ENCODE measurements at regions of chr4 and their contacts with region 1.

Region 1: GRCh38 chr4:38804654-38805295 is at the start of gene TLR1:
- DNase-seq: peak in 1 of 2 donors; percentile 77
- ATAC-seq: peak; percentile 82 to 85 (median 83)
- H3K4me3 ChIP-seq: peak within 1 kb of the TSS; percentile 58
- H3K4me3 Mint-ChIP-seq: peak within 1 kb of the TSS; percentile 99
- H3K27ac ChIP-seq: peak within 1 kb of the TSS; percentile 63
- H3K27ac Mint-ChIP-seq: peak within 1 kb of the TSS; percentile 94
- H3K4me1 ChIP-seq: peaks cover 32% of the 10 kb centered on the region
- H3K4me1 Mint-ChIP-seq: peaks cover 41 to 51% of the 10 kb centered on the region in 2 donors
- H3K27me3 ChIP-seq: no peaks in the 10 kb centered on the region
- H3K27me3 Mint-ChIP-seq: no peaks in the 10 kb centered on the region
- CTCF ChIP-seq: peak; percentile 78
- total RNA-seq, gene TLR1: 25.6 to 51.5 (median 30.0) TPM

Region 2: GRCh38 chr4:38681281-38681991 is 123.3 kb before region 1 on chr4:
- intact Hi-C with region 1: loop called (anchors 10 kb)
- DNase-seq: no peak
- ATAC-seq: no peak
- H3K4me3 ChIP-seq: no peak overlapping the region
- H3K4me3 Mint-ChIP-seq: peak overlapping the region; percentile 59
- H3K27ac ChIP-seq: no peak overlapping the region
- H3K27ac Mint-ChIP-seq: peak overlapping the region; percentile 87
- H3K4me1 ChIP-seq: peaks cover 42% of the 10 kb centered on the region
- H3K4me1 Mint-ChIP-seq: peaks cover 76 to 82% of the 10 kb centered on the region in 2 donors
- H3K27me3 ChIP-seq: no peaks in the 10 kb centered on the region
- H3K27me3 Mint-ChIP-seq: no peaks in the 10 kb centered on the region
- CTCF ChIP-seq: no peak

Region 3: GRCh38 chr4:38856524-38857337 is 52.0 kb after region 1 on chr4 and contains the start of gene TLR6:
- intact Hi-C with region 1: loop called (anchors 5 kb)
- DNase-seq: peak in 1 of 2 donors; percentile 89
- ATAC-seq: peak; percentile 77 to 81 (median 79)
- H3K4me3 ChIP-seq: peak within 1 kb of the TSS; percentile 48
- H3K4me3 Mint-ChIP-seq: peak within 1 kb of the TSS; percentile 92
- H3K27ac ChIP-seq: peak within 1 kb of the TSS; percentile 65
- H3K27ac Mint-ChIP-seq: peak within 1 kb of the TSS; percentile 78 to 84
- H3K4me1 ChIP-seq: peaks cover 13% of the 10 kb centered on the region
- H3K4me1 Mint-ChIP-seq: peaks cover 0 to 13% of the 10 kb centered on the region in 2 donors
- H3K27me3 ChIP-seq: no peaks in the 10 kb centered on the region
- H3K27me3 Mint-ChIP-seq: peaks cover 8 to 10% of the 10 kb centered on the region in 2 donors
- CTCF ChIP-seq: peak; percentile 83
- total RNA-seq, gene TLR6: 6.3 to 9.8 (median 6.8) TPM